H1 (cell line): ENCODE measurements at regions of chr6 and their contacts with region 1.

Region 1: GRCh38 chr6:89432875-89433251 is at the start of gene ANKRD6:
- DNase-seq: peak; percentile 29 to 97
- H3K4me3 ChIP-seq: peak within 1 kb of the TSS; percentile 42 to 79 (median 51)
- H3K27ac ChIP-seq: no peak within 1 kb of the TSS
- H3K4me1 ChIP-seq: peaks cover 0 to 6% (median 2%) of the 10 kb centered on the region in 4 experiments; a peak in 3 of 7 replicates
- H3K27me3 ChIP-seq: peaks cover 0 to 16% (median 6%) of the 10 kb centered on the region in 4 experiments; a peak in 5 of 7 replicates
- CTCF ChIP-seq: peak; percentile 83 to 98 (median 92)
- EP300 ChIP-seq: peak in 1 of 2 experiments; percentile 39; a peak in 1 of 3 replicates
- POLR2A ChIP-seq: no peak
- RAD21 ChIP-seq: peak; percentile 86 to 100
- total RNA-seq, gene ANKRD6: 11.0 and 12.8 TPM in 2 replicates

Region 2: DNA sequence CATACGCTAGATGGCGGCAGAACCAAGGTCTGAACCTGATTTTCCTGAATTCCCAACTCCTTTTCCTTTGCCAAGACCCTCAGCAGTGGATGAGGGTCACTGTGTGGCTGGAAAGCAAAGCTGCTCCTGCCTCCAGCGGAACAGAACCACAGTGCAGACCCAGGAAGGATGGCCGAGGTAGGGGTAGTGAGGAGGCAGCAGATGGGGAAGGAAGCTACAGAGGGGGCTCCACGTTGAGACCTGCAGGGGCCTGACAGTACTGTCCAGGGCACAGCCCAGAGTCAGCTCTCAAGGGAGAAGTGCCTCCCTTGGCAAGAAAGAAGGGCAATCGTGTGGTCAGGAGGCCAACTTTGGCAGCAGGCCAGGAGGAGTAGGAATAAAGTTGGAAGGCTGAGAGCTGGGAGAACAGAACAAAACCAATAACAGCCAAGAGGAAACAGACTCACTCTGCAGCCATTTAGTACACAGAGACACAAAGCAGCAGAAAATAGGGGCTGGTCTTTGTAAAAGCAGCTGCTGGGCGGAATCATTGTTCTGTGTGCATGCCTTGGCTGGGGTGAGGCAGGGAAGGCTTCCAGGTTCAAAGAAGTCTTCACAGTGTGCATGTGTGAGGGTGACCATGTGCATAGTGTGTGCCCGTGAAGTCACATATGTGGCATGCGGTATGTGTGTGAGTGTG is 120.9 kb before region 1 on chr6:
- CTCF ChIA-PET with region 1: interaction called, 17 read pairs
- POLR2A ChIA-PET with region 1: no interaction called
- DNase-seq: peak; percentile 38 to 80
- H3K4me3 ChIP-seq: no peak overlapping the region
- H3K27ac ChIP-seq: no peak overlapping the region
- H3K4me1 ChIP-seq: peaks cover 0 to 3% (median 1%) of the 10 kb centered on the region in 4 experiments; a peak in 3 of 7 replicates
- H3K27me3 ChIP-seq: no peaks in the 10 kb centered on the region
- CTCF ChIP-seq: peak; percentile 40 to 98 (median 97)
- EP300 ChIP-seq: no peak
- POLR2A ChIP-seq: no peak
- RAD21 ChIP-seq: peak; percentile 92 to 94

Region 3: DNA sequence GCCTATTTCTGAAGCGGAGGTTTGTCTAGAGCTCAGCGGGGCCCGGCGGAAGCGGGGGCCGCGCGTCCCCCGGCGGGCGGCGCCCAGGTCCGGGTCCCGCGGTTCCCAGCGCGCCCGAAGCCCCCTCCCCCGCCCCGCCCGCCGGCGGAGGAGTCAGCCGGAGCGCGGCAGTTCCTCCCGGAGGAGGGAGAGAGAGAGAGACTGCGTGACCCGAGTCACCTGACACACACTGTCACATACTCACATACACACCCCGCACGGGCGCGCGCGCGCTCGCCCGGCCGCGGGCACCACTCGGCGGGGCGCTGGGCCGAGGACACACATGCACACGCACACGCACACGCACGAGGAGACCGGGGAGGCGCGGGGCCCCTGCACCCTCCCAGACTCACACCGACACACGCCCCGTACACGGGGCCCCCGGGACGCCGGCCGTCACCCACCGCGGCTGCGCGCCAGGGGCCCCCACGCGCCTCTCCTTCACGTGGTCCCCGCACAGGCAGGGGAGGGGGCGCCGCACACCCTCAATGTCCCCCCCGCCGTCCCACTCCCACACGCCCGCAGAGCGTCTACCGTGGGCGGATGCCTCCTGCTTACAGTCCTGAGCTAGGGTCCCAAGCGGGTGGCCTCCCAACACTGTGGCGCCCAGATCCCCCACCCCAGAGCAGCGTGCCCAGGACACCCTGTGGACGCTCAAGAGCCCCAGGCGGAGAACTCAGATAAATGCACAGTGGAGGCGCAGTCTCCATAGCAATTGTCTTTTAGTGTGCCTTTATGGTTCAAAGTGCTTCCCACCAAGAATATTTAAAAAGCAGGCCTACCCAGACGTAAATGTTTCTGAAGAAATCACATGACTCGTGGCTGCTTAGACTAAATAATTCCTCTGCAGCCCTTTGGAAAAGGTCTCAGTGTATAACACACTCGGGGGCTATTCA is 20.5 kb before region 1 on chr6 and contains the start of gene RRAGD:
- CTCF ChIA-PET with region 1: interaction called, 25 read pairs
- POLR2A ChIA-PET with region 1: interaction called, 3 read pairs
- DNase-seq: peak in 1 of 2 experiments; percentile 67
- H3K4me3 ChIP-seq: peak within 1 kb of the TSS; percentile 63 to 98 (median 68)
- H3K27ac ChIP-seq: no peak within 1 kb of the TSS
- H3K4me1 ChIP-seq: peaks cover 10 to 11% (median 10%) of the 10 kb centered on the region in 4 experiments; a peak in 6 of 7 replicates
- H3K27me3 ChIP-seq: peaks cover 2 to 19% (median 16%) of the 10 kb centered on the region in 4 experiments
- CTCF ChIP-seq: no peak
- EP300 ChIP-seq: no peak
- POLR2A ChIP-seq: no peak
- RAD21 ChIP-seq: no peak
- total RNA-seq, gene RRAGD: 29.7 and 30.8 TPM in 2 replicates

Region 4: GRCh38 chr6:89503641-89504040 is 70.8 kb after region 1 on chr6:
- CTCF ChIA-PET with region 1: interaction called, 12 read pairs
- POLR2A ChIA-PET with region 1: no interaction called
- DNase-seq: no peak
- H3K4me3 ChIP-seq: no peak overlapping the region
- H3K27ac ChIP-seq: no peak overlapping the region
- H3K4me1 ChIP-seq: peaks cover 7 to 19% (median 11%) of the 10 kb centered on the region in 4 experiments
- H3K27me3 ChIP-seq: peaks cover 0 to 7% (median 0%) of the 10 kb centered on the region in 4 experiments; a peak in 2 of 7 replicates
- CTCF ChIP-seq: no peak
- EP300 ChIP-seq: no peak
- POLR2A ChIP-seq: no peak
- RAD21 ChIP-seq: no peak

Region 5: DNA sequence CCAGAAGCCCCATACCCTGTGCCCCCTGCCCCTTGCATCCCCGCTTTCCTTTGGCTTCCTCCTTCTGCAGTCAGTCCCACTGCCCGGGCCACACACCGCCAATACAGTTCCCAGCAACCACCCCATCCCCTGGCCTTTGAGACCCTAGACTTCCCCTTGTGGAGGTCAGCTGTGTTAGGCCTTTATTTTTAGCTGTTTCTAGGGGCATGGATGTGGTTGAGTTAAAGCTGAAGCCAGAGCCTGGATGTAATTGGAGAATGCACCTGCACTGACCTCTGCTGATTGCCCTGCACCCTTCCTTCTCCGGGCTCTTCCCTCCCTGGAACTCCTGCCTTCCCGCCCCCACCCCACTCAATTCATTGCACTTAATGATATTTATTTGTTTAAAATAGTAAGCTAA is 171.8 kb after region 1 on chr6:
- CTCF ChIA-PET with region 1: interaction called, 183 read pairs
- POLR2A ChIA-PET with region 1: interaction called, 4 read pairs
- DNase-seq: no peak
- H3K4me3 ChIP-seq: no peak overlapping the region
- H3K27ac ChIP-seq: no peak overlapping the region
- H3K4me1 ChIP-seq: no peaks in the 10 kb centered on the region
- H3K27me3 ChIP-seq: no peaks in the 10 kb centered on the region
- CTCF ChIP-seq: peak; percentile 23 to 39 (median 29)
- EP300 ChIP-seq: no peak
- POLR2A ChIP-seq: no peak
- RAD21 ChIP-seq: peak; percentile 41 to 57